ENCODE measurements at regions of chr18 and their contacts with region 1.

Region 1: GRCh38 chr18:57434536-57435494 is at the start of gene ONECUT2:
- DNase-seq: no peak
- H3K4me3 Mint-ChIP-seq: peak within 1 kb of the TSS; percentile 21
- H3K27ac Mint-ChIP-seq: peak within 1 kb of the TSS; percentile 58
- H3K4me1 Mint-ChIP-seq: peaks cover 12% of the 10 kb centered on the region
- H3K27me3 Mint-ChIP-seq: peaks cover 84% of the 10 kb centered on the region
- total RNA-seq, gene ONECUT2: not detected in 2 replicates

Region 2: GRCh38 chr18:56789004-56789888 is 645.6 kb before region 1 on chr18:
- intact Hi-C with region 1: loop called (anchors 10 kb)
- DNase-seq: no peak
- H3K4me3 Mint-ChIP-seq: no peak overlapping the region
- H3K27ac Mint-ChIP-seq: no peak overlapping the region
- H3K4me1 Mint-ChIP-seq: no peaks in the 10 kb centered on the region
- H3K27me3 Mint-ChIP-seq: no peaks in the 10 kb centered on the region

Region 3: DNA sequence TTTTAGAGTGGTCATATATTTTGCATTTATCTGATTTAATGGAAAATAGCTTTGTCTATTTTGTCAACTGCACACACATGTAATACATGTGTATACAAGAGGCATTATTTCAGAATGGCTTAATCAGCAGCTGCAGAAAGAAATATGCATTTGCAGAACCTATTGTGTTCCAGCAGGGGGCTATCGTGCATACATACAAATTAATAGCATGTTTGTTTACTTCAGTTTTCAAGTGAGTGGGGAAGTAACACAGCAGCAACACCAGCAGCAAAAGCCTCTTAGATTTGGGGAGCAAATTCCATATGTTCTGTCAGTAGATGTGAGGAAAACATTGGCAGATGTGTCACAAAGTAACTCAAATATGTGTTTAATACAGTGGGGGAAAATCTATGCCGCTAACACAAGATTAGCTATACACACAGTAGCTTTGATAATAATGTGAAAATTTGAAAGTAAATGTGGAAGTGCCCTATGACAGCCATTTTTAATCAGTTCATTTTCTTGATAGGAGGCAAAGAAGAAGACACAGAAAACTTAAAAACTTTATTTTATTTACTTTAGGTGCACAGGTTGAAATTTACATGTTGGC is 565.5 kb before region 1 on chr18:
- intact Hi-C with region 1: loop called (anchors 5 kb)
- DNase-seq: no peak
- H3K4me3 Mint-ChIP-seq: no peak overlapping the region
- H3K27ac Mint-ChIP-seq: no peak overlapping the region
- H3K4me1 Mint-ChIP-seq: peaks cover 6% of the 10 kb centered on the region
- H3K27me3 Mint-ChIP-seq: no peaks in the 10 kb centered on the region

Region 4: DNA sequence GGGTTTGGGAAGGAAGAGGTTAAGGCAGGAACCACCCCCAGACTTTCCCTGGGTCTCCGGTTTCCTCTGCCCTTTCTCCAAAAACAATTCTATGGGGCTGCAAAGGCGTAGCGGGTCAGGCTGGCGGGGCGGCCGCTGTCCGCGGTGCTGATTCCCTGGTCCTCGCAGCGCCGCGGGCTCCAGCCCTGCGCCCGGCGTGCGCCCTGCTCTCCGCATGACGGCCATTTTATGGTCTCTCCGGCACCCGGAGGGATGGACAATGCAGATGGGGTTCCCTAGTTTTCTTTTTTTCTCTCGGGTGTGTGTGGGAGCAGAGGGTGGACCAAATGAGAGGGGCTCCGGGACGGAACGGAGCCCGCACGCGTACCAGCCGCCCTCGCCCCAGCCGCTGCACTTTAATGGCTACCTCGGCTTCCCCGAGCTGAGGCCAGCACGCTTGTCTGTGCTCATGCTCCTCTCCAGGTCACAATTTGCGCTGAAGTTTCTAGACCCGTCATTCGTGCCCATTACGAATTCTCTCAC is 80.8 kb before region 1 on chr18:
- intact Hi-C with region 1: loop called (anchors 5 kb)
- DNase-seq: no peak
- H3K4me3 Mint-ChIP-seq: no peak overlapping the region
- H3K27ac Mint-ChIP-seq: no peak overlapping the region
- H3K4me1 Mint-ChIP-seq: no peaks in the 10 kb centered on the region
- H3K27me3 Mint-ChIP-seq: peaks cover 34% of the 10 kb centered on the region

Region 5: GRCh38 chr18:57466745-57467409 is 32.1 kb after region 1 on chr18:
- intact Hi-C with region 1: no loop called
- DNase-seq: no peak
- H3K4me3 Mint-ChIP-seq: no peak overlapping the region
- H3K27ac Mint-ChIP-seq: no peak overlapping the region
- H3K4me1 Mint-ChIP-seq: no peaks in the 10 kb centered on the region
- H3K27me3 Mint-ChIP-seq: peaks cover 3% of the 10 kb centered on the region

Region 6: DNA sequence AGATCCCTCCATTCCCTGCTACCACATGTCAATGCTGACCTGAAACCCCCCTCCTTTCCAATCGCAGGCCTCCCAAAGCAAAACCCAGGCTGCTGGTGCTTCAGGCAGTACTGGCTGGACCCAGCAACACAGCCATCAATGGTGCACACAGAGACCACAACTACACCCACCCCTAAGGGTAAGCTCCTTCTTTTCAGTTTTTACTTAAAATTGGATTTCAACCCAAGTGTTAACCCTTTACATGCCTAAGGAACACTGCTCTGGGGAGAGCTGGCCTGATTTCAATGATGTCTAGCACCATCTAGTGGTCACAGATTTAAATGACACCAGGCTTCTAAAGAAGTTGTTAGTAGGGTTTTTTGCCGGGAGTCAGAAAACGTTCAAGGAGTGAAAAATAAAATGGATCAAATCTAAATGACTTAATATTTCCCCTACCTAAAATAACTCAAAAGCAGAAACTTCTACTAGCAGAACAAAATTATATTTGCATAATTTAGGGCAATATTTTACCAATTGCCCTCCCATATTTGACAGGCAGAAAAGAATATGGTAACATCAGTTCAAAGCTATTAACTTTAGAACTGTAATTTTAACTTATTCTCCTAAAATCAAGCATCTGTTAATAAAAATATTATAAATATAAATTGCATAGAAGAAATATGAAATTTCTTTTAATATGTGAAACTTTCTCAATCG is 127.1 kb after region 1 on chr18:
- intact Hi-C with region 1: no loop called
- DNase-seq: no peak
- H3K4me3 Mint-ChIP-seq: no peak overlapping the region
- H3K27ac Mint-ChIP-seq: no peak overlapping the region
- H3K4me1 Mint-ChIP-seq: no peaks in the 10 kb centered on the region
- H3K27me3 Mint-ChIP-seq: no peaks in the 10 kb centered on the region

Region 7: DNA sequence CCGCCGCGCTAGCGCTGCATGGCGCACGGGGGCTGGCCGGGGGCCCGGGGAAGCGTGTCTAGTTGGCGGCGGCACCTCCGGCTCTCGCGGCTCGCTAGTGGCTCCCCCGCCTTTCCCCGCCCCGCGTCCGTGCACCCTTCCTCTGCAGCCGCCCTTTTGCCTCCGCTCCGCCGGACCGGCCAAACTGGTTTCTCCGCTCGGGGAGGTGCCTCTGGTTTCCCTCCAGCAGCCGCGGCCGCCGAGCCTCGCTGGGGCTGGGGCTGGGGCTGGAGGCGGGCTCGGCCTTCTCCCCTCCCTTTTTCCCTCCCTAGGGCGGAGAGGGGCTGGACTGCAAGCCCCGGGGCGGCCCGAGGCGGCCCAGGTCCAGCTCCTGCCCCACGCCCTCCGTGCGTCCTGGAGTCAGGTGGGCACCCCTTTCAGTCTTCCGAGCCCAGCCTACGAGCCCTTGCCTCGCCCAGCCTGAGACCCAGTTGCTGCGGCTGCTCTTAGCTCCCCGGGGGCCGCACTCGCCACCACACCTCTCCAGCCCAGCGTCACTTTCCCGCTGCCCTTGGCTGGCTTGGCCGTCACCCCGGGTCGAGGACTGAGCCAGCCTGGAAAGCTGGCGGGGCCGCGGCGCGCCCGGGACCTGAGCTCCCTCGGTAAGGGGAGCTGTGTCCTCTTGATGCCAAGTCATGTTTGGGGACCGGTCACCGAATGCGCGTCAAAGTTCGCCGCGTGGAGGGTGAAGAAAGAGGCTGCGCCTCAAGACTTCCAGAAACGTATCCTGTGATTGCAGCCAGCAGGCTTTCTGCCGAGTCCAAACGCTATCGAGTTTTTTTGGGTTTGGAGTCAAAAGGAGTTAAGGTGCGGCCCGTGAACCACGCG is 368.5 kb after region 1 on chr18 and contains the start of gene ATP8B1:
- intact Hi-C with region 1: loop called (anchors 5 kb)
- DNase-seq: no peak
- H3K4me3 Mint-ChIP-seq: peak within 1 kb of the TSS; percentile 37
- H3K27ac Mint-ChIP-seq: no peak within 1 kb of the TSS
- H3K4me1 Mint-ChIP-seq: peaks cover 3% of the 10 kb centered on the region
- H3K27me3 Mint-ChIP-seq: peaks cover 52% of the 10 kb centered on the region
- total RNA-seq, gene ATP8B1: not detected in 2 replicates

Region 8: DNA sequence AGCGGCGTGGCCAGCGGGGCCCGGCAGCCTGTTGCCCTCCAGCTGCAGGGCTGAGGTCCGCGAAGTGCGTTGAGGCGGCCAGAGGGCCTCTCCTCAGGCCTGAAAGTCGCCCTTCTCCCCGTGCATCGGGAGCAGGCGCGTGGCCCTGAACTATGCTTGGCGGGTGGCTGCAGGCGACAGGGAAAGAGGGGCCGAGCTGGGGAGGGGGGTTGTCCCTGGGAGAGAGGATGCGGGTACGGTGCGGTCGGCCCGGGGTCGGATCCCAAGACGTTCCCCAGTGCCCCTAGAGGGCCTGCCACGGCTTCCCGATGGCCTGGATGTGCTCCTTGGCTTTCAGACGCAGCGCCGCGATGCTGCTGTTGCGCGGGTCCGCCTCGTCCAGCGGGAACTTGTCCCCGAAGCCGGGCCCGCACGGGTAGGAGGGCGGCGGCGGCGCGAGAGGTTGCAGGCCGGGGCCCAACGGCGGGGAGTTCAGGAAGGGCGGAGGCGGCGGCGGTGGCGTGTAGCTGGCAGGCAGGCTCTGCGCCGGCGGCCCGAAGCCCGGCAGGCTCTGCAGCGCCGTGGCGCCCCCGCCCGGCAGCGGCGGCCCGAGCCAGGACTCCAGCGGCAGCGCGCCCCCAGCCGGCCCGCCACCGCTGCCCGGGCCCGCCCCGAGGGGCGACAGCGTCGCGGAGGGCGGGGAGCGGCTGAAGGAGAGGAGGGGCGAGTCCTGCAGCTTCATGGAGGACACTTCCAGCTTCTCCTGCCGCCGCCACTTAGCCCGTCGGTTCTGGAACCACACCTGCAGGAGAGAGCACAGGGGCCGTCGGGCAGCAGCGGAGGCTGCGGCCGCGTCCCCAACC is 1834.1 kb after region 1 on chr18:
- intact Hi-C with region 1: loop called (anchors 5 kb)
- DNase-seq: peak; percentile 40
- H3K4me3 Mint-ChIP-seq: peak overlapping the region; percentile 37
- H3K27ac Mint-ChIP-seq: no peak overlapping the region
- H3K4me1 Mint-ChIP-seq: peaks cover 16% of the 10 kb centered on the region
- H3K27me3 Mint-ChIP-seq: peaks cover 77% of the 10 kb centered on the region

Measured in activated T-helper 2 cell treated with anti-CD3 and anti-CD28 coated beads, Interferon-gamma antibody, Interleukin-2, Interleukin-4, amounts not matched to agents 10 μg/mL and 5 μg/mL and 100 μg/mL, durations not matched to agents 14 hours and 24 hours and 36 hours (primary cell).